ENCODE measurements at regions of chr12 and their contacts with region 1.

Region 1: DNA sequence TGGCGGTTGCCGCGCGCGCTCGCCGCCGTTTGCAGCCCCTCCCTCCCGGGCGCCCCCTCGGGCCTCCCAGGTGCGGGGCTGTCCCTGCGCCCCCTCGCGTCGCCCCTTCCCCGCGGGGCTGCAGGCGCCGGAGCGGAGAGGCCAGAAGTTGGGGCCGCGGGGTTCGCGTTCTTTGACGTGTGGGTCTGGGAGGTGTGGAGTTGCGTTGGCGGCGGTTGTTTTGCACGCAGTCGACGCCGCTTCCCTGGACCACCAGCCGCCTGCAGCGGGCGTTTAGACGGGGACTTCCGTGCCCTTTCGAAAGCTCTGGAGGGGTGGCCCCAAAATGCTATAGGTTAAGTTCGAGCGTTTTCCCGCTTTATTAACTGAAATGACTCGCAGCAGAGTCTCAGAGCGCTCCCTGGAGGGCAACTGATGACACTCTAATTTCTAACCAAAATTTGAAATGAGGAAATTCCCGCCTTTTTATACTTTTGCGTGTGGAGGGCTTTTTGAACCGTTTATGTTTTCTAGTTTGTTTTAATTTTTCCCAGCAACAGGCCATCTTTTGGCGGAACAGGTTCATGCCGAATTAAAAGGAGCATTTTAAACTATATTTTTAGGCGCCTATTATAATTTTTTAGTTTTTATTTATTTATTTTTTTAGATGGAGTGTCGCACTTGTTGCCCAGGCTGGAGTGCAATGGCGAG is 939 bp downstream of the TMPO start:
- DNase-seq: peak; percentile 90
- H3K4me3 Mint-ChIP-seq: peak overlapping the region; percentile 100
- H3K27ac Mint-ChIP-seq: peak overlapping the region; percentile 100
- H3K4me1 Mint-ChIP-seq: peaks cover 29% of the 10 kb centered on the region
- H3K27me3 Mint-ChIP-seq: no peaks in the 10 kb centered on the region

Region 2: GRCh38 chr12:98373025-98373554 is 143.2 kb before region 1 on chr12:
- CTCF ChIA-PET with region 1: no interaction called
- POLR2A ChIA-PET with region 1: no interaction called
- DNase-seq: no peak
- H3K4me3 Mint-ChIP-seq: no peak overlapping the region
- H3K27ac Mint-ChIP-seq: no peak overlapping the region
- H3K4me1 Mint-ChIP-seq: peaks cover 31% of the 10 kb centered on the region
- H3K27me3 Mint-ChIP-seq: peaks cover 47% of the 10 kb centered on the region

Region 3: DNA sequence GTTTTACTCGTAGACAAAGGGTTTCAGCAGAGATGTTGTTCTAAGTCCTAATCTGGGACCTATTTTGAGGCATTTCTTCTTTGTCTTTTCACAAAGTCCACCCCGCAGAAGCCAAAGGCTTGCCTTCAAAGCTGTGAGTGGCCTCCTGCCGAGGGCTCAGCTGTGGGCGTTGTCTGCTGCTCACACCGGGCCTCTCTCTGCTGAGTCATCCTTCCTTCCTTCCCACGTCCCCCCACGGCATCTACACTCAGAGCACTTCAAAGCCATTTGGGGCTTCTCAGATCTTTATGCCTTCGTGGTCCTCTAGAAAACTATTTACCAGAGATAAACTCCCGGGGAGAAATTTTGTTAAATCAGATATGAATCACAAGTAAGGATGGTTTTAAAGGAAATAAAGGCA is 116.8 kb before region 1 on chr12:
- CTCF ChIA-PET with region 1: no interaction called
- POLR2A ChIA-PET with region 1: interaction called, 16 read pairs
- DNase-seq: peak; percentile 76
- H3K4me3 Mint-ChIP-seq: peak overlapping the region; percentile 31
- H3K27ac Mint-ChIP-seq: peak overlapping the region; percentile 67
- H3K4me1 Mint-ChIP-seq: peaks cover 46% of the 10 kb centered on the region
- H3K27me3 Mint-ChIP-seq: no peaks in the 10 kb centered on the region

Region 4: GRCh38 chr12:98490501-98491453 is 25.6 kb before region 1 on chr12:
- CTCF ChIA-PET with region 1: interaction called, 69 read pairs
- POLR2A ChIA-PET with region 1: interaction called, 85 read pairs
- DNase-seq: peak; percentile 84
- H3K4me3 Mint-ChIP-seq: peak overlapping the region; percentile 12
- H3K27ac Mint-ChIP-seq: peak overlapping the region; percentile 78
- H3K4me1 Mint-ChIP-seq: peaks cover 6% of the 10 kb centered on the region
- H3K27me3 Mint-ChIP-seq: peaks cover 9% of the 10 kb centered on the region

Region 5: DNA sequence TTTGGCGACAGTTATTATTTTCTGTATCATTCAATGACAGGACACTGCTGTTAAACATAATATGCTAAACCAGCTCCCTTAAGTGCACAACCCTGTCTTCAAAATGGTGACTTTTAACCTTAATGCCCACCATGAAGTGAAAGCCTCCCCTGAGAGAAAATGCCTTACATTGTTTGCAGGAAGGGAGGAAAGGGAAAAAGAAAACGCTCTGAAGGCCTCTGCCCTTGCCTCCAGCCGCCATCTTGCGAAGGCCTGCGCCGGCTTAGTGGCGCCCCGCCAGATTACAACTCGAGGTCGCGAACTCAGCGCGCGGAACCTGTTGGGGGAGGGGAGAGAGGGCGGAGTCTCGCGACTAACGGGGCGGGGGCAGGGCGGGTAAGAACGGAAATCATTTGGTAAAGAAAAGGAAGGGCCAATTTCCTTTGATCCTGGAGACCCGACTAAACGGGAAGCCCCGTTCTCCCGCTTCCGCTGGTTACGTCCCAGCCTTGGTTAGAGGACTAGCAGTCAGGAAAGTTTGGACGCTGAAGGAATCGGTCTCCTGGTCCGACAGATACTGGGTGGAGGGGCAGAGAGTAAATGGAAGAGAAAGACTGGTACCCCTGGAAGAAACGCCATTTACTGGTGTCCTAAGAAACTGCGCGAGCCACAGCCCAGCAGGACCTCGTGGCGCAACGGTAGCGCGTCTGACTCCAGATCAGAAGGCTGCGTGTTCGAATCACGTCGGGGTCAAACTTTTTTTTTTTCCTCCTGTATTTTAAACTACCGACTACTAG is 12.5 kb before region 1 on chr12:
- CTCF ChIA-PET with region 1: interaction called, 10 read pairs
- POLR2A ChIA-PET with region 1: interaction called, 248 read pairs
- DNase-seq: peak; percentile 96
- H3K4me3 Mint-ChIP-seq: peak overlapping the region; percentile 86
- H3K27ac Mint-ChIP-seq: peak overlapping the region; percentile 98
- H3K4me1 Mint-ChIP-seq: peaks cover 35% of the 10 kb centered on the region
- H3K27me3 Mint-ChIP-seq: peaks cover 3% of the 10 kb centered on the region

Region 6: DNA sequence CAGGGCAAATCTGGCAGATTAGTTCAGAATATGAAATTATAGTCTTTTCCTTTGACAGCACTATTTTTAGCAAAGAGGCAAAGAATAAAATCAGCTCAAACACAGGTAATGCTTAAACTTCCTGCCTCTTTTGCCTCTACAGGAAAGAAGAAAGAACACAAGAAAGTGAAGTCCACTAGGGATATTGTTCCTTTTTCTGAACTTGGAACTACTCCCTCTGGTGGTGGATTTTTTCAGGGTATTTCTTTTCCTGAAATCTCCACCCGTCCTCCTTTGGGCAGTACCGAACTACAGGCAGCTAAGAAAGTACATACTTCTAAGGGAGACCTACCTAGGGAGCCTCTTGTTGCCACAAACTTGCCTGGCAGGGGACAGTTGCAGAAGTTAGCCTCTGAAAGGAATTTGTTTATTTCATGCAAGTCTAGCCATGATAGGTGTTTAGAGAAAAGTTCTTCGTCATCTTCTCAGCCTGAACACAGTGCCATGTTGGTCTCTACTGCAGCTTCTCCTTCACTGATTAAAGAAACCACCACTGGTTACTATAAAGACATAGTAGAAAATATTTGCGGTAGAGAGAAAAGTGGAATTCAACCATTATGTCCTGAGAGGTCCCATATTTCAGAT is 16.5 kb after region 1 on chr12:
- CTCF ChIA-PET with region 1: interaction called, 59 read pairs
- POLR2A ChIA-PET with region 1: interaction called, 47 read pairs
- DNase-seq: no peak
- H3K4me3 Mint-ChIP-seq: no peak overlapping the region
- H3K27ac Mint-ChIP-seq: peak overlapping the region; percentile 31
- H3K4me1 Mint-ChIP-seq: peaks cover 40% of the 10 kb centered on the region
- H3K27me3 Mint-ChIP-seq: no peaks in the 10 kb centered on the region

Region 7: GRCh38 chr12:98644711-98645402 is 128.5 kb after region 1 on chr12 and contains the starts of genes APAF1 and IKBIP:
- CTCF ChIA-PET with region 1: interaction called, 5 read pairs
- POLR2A ChIA-PET with region 1: interaction called, 59 read pairs
- DNase-seq: peak; percentile 98
- H3K4me3 Mint-ChIP-seq: peak within 1 kb of the TSS; percentile 96
- H3K27ac Mint-ChIP-seq: peak within 1 kb of the TSS; percentile 95
- H3K4me1 Mint-ChIP-seq: peaks cover 46% of the 10 kb centered on the region
- H3K27me3 Mint-ChIP-seq: no peaks in the 10 kb centered on the region
- total RNA-seq, gene APAF1: 37.4 to 37.8 TPM
- total RNA-seq, gene IKBIP: 25.5 to 26.2 TPM